ENCODE measurements at regions of chr16 and their contacts with region 1.

Region 1: DNA sequence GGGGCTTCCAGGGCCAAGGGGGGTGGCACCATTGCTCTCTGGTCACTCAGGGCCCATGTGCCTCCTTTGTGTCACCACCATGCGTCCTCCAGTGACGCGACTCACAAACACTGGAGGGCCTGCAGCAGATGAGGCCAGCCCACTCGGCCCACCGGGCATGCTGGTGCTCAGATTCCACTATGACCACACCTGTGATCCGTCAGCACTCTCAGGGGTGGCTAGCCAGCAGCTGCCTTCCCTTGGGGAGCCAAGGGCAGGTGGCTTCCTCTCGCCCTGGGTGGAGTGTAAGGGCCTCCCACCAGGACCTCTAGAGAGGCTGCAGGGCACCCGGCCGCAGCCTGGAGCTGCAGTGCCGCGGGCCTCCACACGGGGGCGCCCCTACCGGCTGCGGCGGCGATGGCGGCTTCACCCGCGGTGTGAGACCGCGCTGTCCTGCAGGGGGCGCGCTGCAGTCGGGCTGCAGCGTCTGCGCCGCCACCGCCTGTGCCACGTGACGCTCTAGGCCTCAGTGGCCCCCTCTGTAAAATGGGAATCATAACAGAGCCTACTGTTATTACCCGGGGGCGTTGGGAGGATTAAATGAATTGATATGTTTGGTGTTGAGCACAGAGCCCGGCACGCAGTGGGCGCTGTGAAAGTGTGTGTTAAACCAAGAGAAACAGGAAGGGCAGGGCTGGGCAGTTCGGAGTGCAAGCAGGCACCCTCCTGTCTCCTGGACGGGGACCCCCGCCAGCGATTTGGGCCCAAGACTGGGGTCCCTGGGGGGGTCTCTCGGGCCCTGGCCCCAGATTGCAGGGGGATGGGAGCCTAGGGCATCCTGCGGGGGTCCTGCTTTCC is 192.4 kb upstream of the GSE1 start:
- DNase-seq: peak; percentile 89
- ATAC-seq: peak; percentile 76
- H3K4me3 Mint-ChIP-seq: no peak overlapping the region
- H3K27ac Mint-ChIP-seq: no peak overlapping the region
- H3K4me1 Mint-ChIP-seq: peaks cover 7% of the 10 kb centered on the region
- H3K27me3 Mint-ChIP-seq: no peaks in the 10 kb centered on the region

Region 2: GRCh38 chr16:85448557-85449197 is 28.0 kb after region 1 on chr16:
- CTCF ChIA-PET with region 1: interaction called, 26 read pairs
- POLR2A ChIA-PET with region 1: no interaction called
- intact Hi-C with region 1: no loop called
- DNase-seq: peak; percentile 43
- ATAC-seq: peak; percentile 50
- H3K4me3 Mint-ChIP-seq: no peak overlapping the region
- H3K27ac Mint-ChIP-seq: peak overlapping the region; percentile 42
- H3K4me1 Mint-ChIP-seq: peaks cover 30% of the 10 kb centered on the region
- H3K27me3 Mint-ChIP-seq: no peaks in the 10 kb centered on the region